Caco-2 (cell line): ENCODE measurements at regions of chr20 and their contacts with region 1.

Region 1: GRCh38 chr20:34190679-34191090 is 50.5 kb upstream of the ASIP start:
- DNase-seq: peak; percentile 88 to 89
- H3K4me3 ChIP-seq: no peak overlapping the region
- H3K4me3 Mint-ChIP-seq: no peak overlapping the region
- H3K27ac Mint-ChIP-seq: no peak overlapping the region
- H3K4me1 ChIP-seq: no peaks in the 10 kb centered on the region
- H3K4me1 Mint-ChIP-seq: no peaks in the 10 kb centered on the region
- H3K27me3 ChIP-seq: no peaks in the 10 kb centered on the region; the same call in 1 of the 2 replicates
- H3K27me3 Mint-ChIP-seq: peaks cover 9% of the 10 kb centered on the region
- CTCF ChIP-seq: peak; percentile 97 to 99

Region 2: GRCh38 chr20:33606118-33606771 is 584.4 kb before region 1 on chr20:
- CTCF ChIA-PET with region 1: no interaction called
- POLR2A ChIA-PET with region 1: no interaction called
- intact Hi-C with region 1: no loop called
- DNase-seq: no peak
- H3K4me3 ChIP-seq: no peak overlapping the region
- H3K4me3 Mint-ChIP-seq: no peak overlapping the region
- H3K27ac Mint-ChIP-seq: no peak overlapping the region
- H3K4me1 ChIP-seq: no peaks in the 10 kb centered on the region
- H3K4me1 Mint-ChIP-seq: no peaks in the 10 kb centered on the region
- H3K27me3 ChIP-seq: no peaks in the 10 kb centered on the region
- H3K27me3 Mint-ChIP-seq: no peaks in the 10 kb centered on the region
- CTCF ChIP-seq: no peak

Region 3: DNA sequence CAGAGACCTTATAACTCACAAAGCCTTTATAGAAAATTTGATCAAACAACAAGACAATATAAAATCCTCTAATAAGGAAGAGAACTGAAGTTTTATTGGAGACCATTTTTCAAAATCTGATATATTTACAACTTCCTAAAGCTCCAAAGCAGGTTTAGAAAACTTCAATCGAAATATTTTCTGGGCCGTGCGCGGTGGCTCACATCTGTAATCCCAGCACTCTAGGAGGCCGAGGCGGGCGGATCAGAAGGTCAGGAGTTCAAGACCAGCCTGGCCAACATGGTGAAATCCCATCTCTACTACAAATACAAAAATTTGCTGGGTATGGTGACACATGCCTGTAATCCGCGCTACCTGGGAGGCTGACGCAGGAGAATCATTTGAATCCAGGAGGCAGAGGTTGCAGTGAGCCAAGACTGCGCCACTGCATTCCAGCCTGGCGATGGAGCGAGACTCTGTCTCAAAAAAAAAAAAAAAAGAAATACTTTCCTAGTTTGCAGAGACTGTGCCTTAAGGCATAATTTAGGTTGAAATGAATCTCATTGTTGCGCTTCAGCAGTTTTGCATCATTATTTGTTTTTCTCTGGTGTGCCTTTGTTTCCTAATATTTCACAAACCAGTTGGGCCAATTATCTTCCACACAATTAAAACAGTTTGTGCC is 10.1 kb before region 1 on chr20:
- CTCF ChIA-PET with region 1: interaction called, 10 read pairs
- POLR2A ChIA-PET with region 1: no interaction called
- intact Hi-C with region 1: no loop called
- DNase-seq: peak; percentile 58 to 64
- H3K4me3 ChIP-seq: no peak overlapping the region
- H3K4me3 Mint-ChIP-seq: no peak overlapping the region
- H3K27ac Mint-ChIP-seq: no peak overlapping the region
- H3K4me1 ChIP-seq: 0 out of 2 replicates have a peak, but pooled peaks cover 12% of the 10 kb centered on the region
- H3K4me1 Mint-ChIP-seq: peaks cover 24% of the 10 kb centered on the region
- H3K27me3 ChIP-seq: no peaks in the 10 kb centered on the region
- H3K27me3 Mint-ChIP-seq: no peaks in the 10 kb centered on the region
- CTCF ChIP-seq: no peak

Region 4: GRCh38 chr20:34254979-34255378 is 64.3 kb after region 1 on chr20:
- CTCF ChIA-PET with region 1: interaction called, 29 read pairs
- POLR2A ChIA-PET with region 1: no interaction called
- intact Hi-C with region 1: loop called (anchors 1 kb)
- DNase-seq: peak in 1 of 2 experiments; percentile 34
- H3K4me3 ChIP-seq: no peak overlapping the region
- H3K4me3 Mint-ChIP-seq: no peak overlapping the region
- H3K27ac Mint-ChIP-seq: no peak overlapping the region
- H3K4me1 ChIP-seq: peaks cover 19% of the 10 kb centered on the region
- H3K4me1 Mint-ChIP-seq: peaks cover 27% of the 10 kb centered on the region
- H3K27me3 ChIP-seq: no peaks in the 10 kb centered on the region
- H3K27me3 Mint-ChIP-seq: no peaks in the 10 kb centered on the region
- CTCF ChIP-seq: no peak

Region 5: GRCh38 chr20:34516247-34517113 is 325.8 kb after region 1 on chr20 and contains the start of gene DYNLRB1:
- CTCF ChIA-PET with region 1: interaction called, 10 read pairs
- POLR2A ChIA-PET with region 1: no interaction called
- intact Hi-C with region 1: no loop called
- DNase-seq: peak; percentile 100
- H3K4me3 ChIP-seq: peak within 1 kb of the TSS; percentile 52
- H3K4me3 Mint-ChIP-seq: peak within 1 kb of the TSS; percentile 85
- H3K27ac Mint-ChIP-seq: peak within 1 kb of the TSS; percentile 91
- H3K4me1 ChIP-seq: peaks cover 6% of the 10 kb centered on the region
- H3K4me1 Mint-ChIP-seq: peaks cover 19% of the 10 kb centered on the region
- H3K27me3 ChIP-seq: no peaks in the 10 kb centered on the region
- H3K27me3 Mint-ChIP-seq: no peaks in the 10 kb centered on the region
- CTCF ChIP-seq: no peak
- total RNA-seq, gene DYNLRB1: 357 and 359 TPM in 2 replicates

Region 6: GRCh38 chr20:34549291-34549928 is 358.7 kb after region 1 on chr20:
- CTCF ChIA-PET with region 1: interaction called, 8 read pairs
- POLR2A ChIA-PET with region 1: no interaction called
- intact Hi-C with region 1: loop called (anchors 5 kb)
- DNase-seq: peak; percentile 74 to 76
- H3K4me3 ChIP-seq: no peak overlapping the region
- H3K4me3 Mint-ChIP-seq: no peak overlapping the region
- H3K27ac Mint-ChIP-seq: peak overlapping the region; percentile 58
- H3K4me1 ChIP-seq: no peaks in the 10 kb centered on the region
- H3K4me1 Mint-ChIP-seq: peaks cover 8% of the 10 kb centered on the region
- H3K27me3 ChIP-seq: no peaks in the 10 kb centered on the region
- H3K27me3 Mint-ChIP-seq: no peaks in the 10 kb centered on the region
- CTCF ChIP-seq: no peak